ENCODE measurements at regions of chr4 and their contacts with region 1.

Region 1: DNA sequence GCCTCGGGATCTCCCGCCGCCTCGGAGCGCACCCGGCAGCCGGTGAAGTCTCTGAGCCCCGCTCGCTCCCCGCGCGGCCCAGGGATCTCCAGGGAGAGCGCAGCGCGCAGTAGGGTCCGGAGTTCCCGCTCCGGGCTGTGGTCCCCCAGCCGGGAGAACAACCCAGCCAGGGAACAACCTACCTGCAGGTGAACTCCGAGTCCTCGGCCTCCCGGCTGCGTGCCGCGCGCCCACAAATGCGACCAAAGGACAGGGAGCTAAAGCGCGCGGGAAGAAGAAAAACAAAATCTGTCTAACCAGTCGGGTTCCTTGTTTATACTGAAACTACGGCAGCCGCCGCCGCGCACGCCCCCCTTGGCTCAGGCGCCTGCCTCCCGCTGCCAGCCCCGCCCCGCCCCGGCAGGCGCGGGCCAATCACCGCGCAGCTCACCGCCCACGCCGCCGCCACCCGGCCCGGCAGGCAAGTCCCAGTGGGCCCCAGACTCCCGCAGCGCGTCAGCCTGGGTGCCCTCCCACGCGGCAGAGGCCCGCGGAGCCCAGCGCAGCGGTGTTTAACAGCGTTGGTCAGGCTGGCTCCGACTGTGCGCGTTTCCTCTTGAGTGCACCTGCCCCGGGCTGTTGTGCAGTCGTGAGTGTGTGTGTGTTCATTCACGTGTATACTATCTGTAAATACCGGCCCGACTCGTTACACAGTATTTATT is at the start of gene RASGEF1B:
- DNase-seq: peak; percentile 93
- total RNA-seq, gene RASGEF1B: 2.4 TPM

Region 2: GRCh38 chr4:81724925-81725329 is 253.2 kb after region 1 on chr4:
- intact Hi-C with region 1: loop called (anchors 10 kb)
- DNase-seq: no peak

Region 3: DNA sequence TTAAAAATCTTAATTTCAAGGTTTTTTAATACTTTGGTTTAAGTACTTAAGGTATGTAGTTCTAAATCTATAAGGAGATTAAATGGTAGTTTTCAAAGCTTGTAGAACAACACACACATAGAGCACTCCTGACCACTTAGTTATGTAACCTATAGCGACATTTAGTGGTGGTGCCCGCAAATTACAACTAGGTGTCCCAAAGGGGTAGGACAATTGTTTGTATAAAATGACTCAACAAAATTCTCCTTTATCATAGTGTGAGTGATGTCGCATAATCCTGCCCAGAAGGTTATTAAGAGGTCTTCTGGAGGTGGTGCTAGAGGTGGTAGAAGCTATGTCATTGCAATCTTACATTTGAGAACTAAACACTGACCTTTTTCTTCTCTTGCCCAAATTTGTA is 373.0 kb after region 1 on chr4:
- intact Hi-C with region 1: loop called (anchors 1 kb)
- DNase-seq: peak; percentile 80

Region 4: DNA sequence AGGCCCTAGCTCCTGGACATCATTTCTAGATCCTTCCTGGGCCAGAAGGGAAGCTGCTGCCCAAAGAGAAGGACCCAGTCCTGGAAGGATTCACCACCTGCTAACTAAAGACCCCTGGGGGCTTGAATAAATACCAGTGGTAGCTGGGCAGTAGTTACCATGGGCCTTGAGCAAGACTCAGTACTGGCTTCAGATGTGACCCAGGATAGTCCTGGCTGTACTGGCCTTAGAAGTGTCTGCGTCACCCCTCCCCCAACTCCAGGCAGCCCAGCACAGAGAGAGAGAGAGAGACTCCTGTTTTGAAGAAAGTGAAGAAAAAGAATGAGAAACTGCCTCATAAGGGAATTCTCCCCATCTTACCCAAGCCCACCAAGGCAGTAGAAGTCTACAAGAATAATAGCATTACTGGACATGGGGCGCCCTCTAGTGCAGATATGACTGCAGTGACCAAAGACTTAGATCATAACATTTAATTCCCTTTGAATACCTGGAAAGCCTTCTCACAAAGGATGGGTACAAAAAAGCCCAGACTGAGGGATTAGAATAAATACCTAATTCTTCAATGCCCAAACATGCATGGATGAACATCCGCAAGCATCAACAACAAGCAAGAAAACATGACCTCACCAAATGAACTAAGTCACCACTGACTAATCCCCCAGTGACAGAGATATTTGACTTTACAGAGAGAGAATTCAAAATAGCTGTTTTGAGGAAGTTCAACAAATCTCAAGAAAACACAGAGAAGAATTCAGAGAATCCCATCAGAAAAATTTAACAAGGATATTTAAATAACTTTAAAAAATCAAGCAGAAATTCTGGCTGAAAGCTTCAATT is 730.3 kb after region 1 on chr4:
- intact Hi-C with region 1: loop called (anchors 5 kb)
- DNase-seq: no peak